ENCODE measurements at regions of chr4 and their contacts with region 1.

Region 1: DNA sequence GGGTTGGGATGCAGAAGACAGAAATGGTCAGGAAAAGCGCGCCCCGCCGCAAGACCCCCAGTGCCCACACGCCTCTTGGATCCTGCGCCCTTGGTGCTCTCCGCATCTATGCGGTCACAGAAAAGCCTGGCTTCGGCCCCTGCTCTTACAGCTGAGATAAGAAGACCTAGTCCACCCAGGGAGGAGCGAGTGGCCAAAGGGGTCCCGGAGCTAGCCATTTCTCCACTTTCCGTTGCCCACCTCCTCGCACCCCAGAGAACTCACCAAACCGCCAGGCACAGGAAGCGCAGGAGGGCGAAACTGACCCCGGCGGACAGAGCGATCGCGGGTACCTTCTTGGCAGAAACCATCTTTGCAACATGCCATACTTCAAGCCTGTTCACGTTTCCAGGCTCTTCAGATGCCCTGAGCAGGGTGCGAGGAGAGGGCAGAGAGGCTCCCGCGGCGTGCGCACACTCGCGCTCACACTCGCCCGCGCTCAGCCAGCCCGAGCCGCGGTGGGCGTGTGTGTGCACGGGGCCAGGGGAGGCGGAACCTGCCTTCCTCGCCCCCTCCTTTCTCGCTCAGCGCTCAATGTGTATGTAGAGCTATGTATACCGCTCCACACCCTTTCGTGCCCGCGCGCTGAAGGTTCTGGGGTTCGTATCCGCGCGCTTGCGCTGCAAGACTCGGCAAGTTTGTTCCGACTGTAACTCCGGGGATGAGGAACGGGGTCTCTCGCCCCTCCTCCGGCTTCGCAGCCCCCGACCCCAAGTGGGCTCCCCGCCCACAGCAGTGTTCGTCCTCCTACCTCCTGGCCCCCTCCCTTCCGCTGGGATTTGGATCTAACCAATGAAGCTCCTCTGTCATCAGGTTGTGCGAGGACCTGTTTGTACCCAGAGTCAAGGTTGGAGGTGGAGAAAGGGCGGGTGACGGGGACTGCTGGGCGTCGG is at the start of gene GABRA4:
- DNase-seq: no peak
- H3K4me3 ChIP-seq: peak within 1 kb of the TSS; percentile 67
- H3K27ac ChIP-seq: no peak within 1 kb of the TSS
- H3K27me3 ChIP-seq: peaks cover 22% of the 10 kb centered on the region
- CTCF ChIP-seq: no peak
- polyA plus RNA-seq, gene GABRA4: 1.9 and 3.1 TPM in 2 replicates

Region 2: DNA sequence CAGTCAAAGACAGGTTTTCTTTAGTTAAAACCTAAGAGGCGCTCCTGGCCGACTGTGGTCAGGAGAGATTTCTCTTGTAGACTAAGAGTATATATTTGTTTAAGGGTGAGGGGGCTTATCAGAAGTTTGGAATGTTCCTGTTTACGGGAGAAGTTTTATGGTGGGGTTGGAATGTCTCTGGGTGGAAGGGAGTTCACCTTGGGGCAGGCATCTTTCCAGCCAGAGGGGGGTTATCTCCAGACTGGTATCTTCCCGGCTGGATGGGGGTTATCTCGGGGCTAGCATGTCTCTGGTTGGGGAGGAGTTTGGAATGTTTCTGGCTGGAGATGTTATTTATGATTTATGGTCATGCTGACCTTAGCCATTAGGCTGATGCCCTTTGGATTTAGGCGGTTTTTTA is 200.3 kb before region 1 on chr4:
- CTCF ChIA-PET with region 1: no interaction called
- POLR2A ChIA-PET with region 1: no interaction called
- DNase-seq: no peak
- H3K4me3 ChIP-seq: no peak overlapping the region
- H3K27ac ChIP-seq: no peak overlapping the region
- H3K27me3 ChIP-seq: no peaks in the 10 kb centered on the region
- CTCF ChIP-seq: no peak

Region 3: GRCh38 chr4:47017494-47017893 is 24.2 kb after region 1 on chr4:
- CTCF ChIA-PET with region 1: no interaction called
- POLR2A ChIA-PET with region 1: interaction called, 10 read pairs
- DNase-seq: no peak
- H3K4me3 ChIP-seq: no peak overlapping the region
- H3K27ac ChIP-seq: no peak overlapping the region
- H3K27me3 ChIP-seq: no peaks in the 10 kb centered on the region
- CTCF ChIP-seq: no peak